Ovary (tissue), 10 donors: ENCODE measurements at regions of chr7 and their contacts with region 1.

Region 1: GRCh38 chr7:16695621-16696237 is 49.7 kb downstream of the BZW2 start:
- DNase-seq: no peak
- H3K4me3 ChIP-seq: no peak overlapping the region
- H3K27ac ChIP-seq: no peak overlapping the region
- H3K4me1 ChIP-seq: no peaks in the 10 kb centered on the region
- H3K27me3 ChIP-seq: no peaks in the 10 kb centered on the region
- CTCF ChIP-seq: peak in 1 of 3 donors; percentile 26
- EP300 ChIP-seq: no peak
- POLR2A ChIP-seq: no peak

Region 2: DNA sequence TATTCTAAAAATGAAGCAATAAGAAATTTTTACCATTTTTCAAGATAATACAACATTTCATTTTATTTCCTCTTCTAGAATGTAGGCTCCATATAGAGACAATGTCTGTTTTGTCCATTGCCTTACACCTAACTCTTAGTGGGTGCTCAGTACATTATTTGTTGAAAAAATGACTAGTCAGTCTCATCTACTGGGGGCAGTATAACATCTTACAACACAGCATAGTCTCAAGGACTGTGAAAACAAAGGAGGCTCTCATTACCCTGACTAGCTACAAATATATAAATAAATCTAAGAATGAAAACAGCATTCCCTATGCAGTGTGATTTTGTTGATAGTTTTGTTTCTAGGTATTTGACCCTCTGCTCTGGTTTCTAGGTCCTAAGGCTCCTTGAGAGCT is 286.0 kb before region 1 on chr7:
- intact Hi-C with region 1: loop called in 1 of 4 experiments (anchors 5 kb)
- DNase-seq: no peak
- H3K4me3 ChIP-seq: no peak overlapping the region
- H3K27ac ChIP-seq: no peak overlapping the region
- H3K4me1 ChIP-seq: no peaks in the 10 kb centered on the region
- H3K27me3 ChIP-seq: no peaks in the 10 kb centered on the region
- CTCF ChIP-seq: no peak
- EP300 ChIP-seq: no peak
- POLR2A ChIP-seq: no peak

Region 3: DNA sequence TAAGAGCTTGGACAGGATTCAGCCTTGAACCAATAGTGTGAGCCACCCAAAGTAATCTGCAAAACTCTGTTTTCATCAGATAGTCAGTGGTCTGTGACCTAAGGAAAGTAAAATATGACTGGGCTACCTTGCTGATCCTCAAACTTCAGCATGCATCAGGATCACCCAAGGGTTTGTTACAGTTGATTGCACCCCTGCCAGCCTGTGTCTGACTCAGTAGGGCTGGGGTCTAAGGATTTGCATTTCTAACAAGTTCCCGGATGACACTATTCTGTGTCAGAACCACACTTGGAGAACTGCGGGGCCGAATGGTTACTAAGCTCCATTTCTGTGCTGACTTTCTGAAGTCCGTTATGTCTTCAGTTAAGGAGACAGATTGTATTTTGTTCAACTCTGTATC is 17.2 kb after region 1 on chr7:
- intact Hi-C with region 1: no loop called
- DNase-seq: no peak
- H3K4me3 ChIP-seq: no peak overlapping the region
- H3K27ac ChIP-seq: no peak overlapping the region
- H3K4me1 ChIP-seq: no peaks in the 10 kb centered on the region
- H3K27me3 ChIP-seq: no peaks in the 10 kb centered on the region
- CTCF ChIP-seq: no peak
- EP300 ChIP-seq: no peak
- POLR2A ChIP-seq: no peak

Region 4: DNA sequence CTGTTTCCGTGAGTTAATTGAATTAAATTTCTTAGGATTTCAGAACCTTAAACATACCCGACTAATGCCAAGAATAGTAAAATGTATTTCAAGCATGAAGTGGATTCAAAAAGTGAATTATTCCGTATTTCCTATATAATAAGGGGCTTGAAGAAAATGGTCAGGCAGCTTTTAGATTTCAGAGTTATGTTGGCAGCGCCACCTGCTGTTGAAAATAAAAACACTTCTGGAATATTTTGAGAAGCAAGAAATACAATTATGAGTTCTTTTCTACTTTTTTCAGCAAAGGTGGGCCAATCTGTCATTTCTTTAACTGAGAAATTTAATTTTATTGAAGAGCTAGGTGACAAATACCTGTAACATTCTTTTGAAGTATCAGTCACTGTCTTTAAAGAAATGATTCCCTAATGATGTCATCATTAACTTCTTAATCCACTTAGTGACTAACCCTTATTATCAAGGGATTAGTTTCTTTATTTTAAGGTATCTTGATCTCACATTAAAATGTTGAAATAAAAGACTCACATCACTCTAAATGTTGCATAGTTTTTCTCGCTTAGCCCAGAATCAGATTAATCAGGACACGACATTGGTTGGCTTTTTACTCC is 222.7 kb after region 1 on chr7:
- intact Hi-C with region 1: loop called in 1 of 4 experiments (anchors 5 kb)
- DNase-seq: no peak
- H3K4me3 ChIP-seq: no peak overlapping the region
- H3K27ac ChIP-seq: no peak overlapping the region
- H3K4me1 ChIP-seq: no peaks in the 10 kb centered on the region
- H3K27me3 ChIP-seq: no peaks in the 10 kb centered on the region
- CTCF ChIP-seq: peak in 1 of 3 donors; percentile 27
- EP300 ChIP-seq: no peak
- POLR2A ChIP-seq: no peak